Activated CD4-positive, alpha-beta T cell treated with anti-CD3 and anti-CD28 coated beads, Interleukin-2, amount 10 ng/mL, durations not matched to agents 24 days and 14 days (primary cell): ENCODE measurements at regions of chr15 and their contacts with region 1.

Region 1: GRCh38 chr15:74906446-74907162 is at the start of gene FAM219B:
- DNase-seq: peak; percentile 95
- H3K4me3 Mint-ChIP-seq: peak within 1 kb of the TSS; percentile 97
- H3K27ac Mint-ChIP-seq: peak within 1 kb of the TSS; percentile 93
- H3K4me1 Mint-ChIP-seq: peaks cover 35% of the 10 kb centered on the region
- H3K27me3 Mint-ChIP-seq: no peaks in the 10 kb centered on the region
- total RNA-seq, gene FAM219B: 68.0 and 82.0 TPM in 2 replicates

Region 2: GRCh38 chr15:74839526-74840395 is 66.8 kb before region 1 on chr15:
- intact Hi-C with region 1: no loop called
- DNase-seq: no peak
- H3K4me3 Mint-ChIP-seq: no peak overlapping the region
- H3K27ac Mint-ChIP-seq: no peak overlapping the region
- H3K4me1 Mint-ChIP-seq: peaks cover 30% of the 10 kb centered on the region
- H3K27me3 Mint-ChIP-seq: no peaks in the 10 kb centered on the region

Region 3: DNA sequence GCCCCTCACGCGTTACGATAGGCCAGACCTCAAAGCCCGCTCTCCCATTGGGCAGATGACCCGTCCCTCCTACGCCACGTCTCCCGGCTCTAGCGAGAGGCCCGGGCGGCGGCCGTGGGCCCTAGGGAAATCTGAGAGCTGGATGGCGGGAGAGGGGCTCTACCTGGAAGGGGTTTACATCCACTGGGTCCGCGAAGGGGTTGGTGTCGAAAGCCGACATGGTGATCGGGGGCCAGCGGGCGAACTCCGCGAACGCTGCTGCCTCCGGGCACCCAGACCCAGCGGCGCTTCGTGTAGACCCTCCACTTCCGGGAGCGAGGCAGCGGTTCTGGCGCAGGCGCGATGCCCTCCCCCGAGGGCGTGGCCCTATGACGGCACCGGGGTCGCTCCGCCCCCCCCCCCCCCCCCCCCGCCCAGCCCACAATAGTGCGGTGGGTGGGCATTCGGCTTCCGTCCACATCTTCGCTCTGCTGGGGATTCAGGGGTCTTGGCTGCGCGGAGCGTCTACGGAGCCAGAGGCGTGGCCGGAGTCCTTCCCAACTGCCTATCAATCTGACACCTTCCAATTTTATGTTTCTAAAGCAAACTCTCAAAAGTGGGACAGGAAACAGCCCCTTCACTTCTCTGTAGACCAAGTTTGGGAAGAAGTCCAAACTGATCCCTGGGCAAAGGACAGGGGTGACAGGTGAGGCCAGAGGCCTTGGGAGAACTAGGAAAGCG is 33.4 kb before region 1 on chr15 and contains the start of gene SCAMP2:
- intact Hi-C with region 1: loop called (anchors 1 kb)
- DNase-seq: peak; percentile 96
- H3K4me3 Mint-ChIP-seq: peak within 1 kb of the TSS; percentile 99
- H3K27ac Mint-ChIP-seq: peak within 1 kb of the TSS; percentile 93
- H3K4me1 Mint-ChIP-seq: peaks cover 44% of the 10 kb centered on the region
- H3K27me3 Mint-ChIP-seq: no peaks in the 10 kb centered on the region
- total RNA-seq, gene SCAMP2: 89.4 and 94.8 TPM in 2 replicates

Region 4: GRCh38 chr15:74889883-74890664 is 16.5 kb before region 1 on chr15 and contains the start of gene MPI:
- intact Hi-C with region 1: loop called (anchors 1 kb)
- DNase-seq: peak; percentile 96
- H3K4me3 Mint-ChIP-seq: peak within 1 kb of the TSS; percentile 80
- H3K27ac Mint-ChIP-seq: peak within 1 kb of the TSS; percentile 84
- H3K4me1 Mint-ChIP-seq: peaks cover 39% of the 10 kb centered on the region
- H3K27me3 Mint-ChIP-seq: no peaks in the 10 kb centered on the region
- total RNA-seq, gene MPI: 63.9 and 64.4 TPM in 2 replicates